RWPE1 (cell line): ENCODE measurements at regions of chr3 and their contacts with region 1.

Region 1: DNA sequence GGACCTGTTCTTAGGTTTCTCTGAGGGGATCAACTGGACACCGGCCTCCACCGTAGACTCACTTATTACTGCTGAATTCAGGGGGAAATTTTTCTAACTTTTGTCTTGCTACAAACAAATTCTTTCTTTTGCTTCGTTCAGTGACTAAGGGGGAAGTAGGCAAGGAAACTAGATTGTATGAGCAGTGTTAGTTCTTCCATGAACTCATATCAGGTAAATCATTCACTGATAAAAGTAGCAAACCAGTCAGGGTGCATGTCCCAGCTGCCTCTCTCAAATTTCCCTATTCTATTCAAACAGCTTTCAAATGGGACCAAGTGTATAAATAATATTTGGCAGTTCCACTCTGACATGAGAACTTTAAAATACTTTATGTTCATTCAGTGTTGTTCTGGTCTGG is 7.3 kb upstream of the CCDC13 start:
- DNase-seq: no peak
- H3K27ac ChIP-seq: no peak overlapping the region; the same call in 1 of the 2 replicates
- CTCF ChIP-seq: no peak

Region 2: DNA sequence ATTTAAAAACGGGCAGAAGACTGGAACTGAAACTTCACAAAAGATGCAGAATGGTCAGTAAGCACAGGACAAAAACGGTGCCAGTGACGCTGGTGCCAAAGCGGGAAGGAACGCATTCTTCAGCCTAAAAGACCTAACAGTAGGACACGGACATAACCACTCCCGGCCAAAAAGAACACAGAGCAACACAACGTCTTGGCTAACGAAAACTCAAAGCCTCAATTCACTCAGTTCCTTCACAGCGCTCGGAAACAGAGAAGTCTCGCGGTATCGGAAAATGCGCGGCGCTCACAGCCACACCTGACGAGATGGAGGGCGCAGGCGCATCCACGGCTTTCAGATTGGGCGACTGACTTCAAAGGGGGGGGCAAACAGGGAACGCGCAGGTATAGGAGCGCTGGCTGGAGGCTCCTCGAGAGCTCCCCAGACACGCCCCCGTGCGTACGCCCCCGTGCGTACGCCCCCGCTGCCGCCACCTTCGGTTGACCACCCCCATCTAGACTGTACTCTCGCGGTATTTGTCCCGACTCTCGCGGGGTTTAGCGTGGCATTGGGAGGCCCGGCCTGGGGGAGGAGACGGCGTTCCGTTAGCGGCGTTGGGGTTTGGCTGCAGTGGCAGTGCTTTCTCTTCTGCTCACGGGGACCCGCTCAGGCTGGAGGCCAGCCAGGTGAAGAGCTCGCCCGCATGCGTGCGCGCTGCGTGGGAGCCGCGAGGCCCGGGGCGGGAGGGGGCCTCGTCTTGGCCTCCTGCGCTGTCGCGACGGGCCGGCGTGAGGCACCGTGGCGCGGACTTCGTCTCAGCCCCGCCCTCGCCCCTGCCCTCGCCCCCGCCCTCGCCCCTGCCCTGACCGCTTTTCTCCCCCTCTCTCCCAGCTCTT is 180.0 kb before region 1 on chr3 and contains the start of gene NKTR:
- CTCF ChIA-PET with region 1: no interaction called
- POLR2A ChIA-PET with region 1: no interaction called
- DNase-seq: peak; percentile 94
- H3K27ac ChIP-seq: peak within 1 kb of the TSS; percentile 98
- CTCF ChIP-seq: no peak

Region 3: DNA sequence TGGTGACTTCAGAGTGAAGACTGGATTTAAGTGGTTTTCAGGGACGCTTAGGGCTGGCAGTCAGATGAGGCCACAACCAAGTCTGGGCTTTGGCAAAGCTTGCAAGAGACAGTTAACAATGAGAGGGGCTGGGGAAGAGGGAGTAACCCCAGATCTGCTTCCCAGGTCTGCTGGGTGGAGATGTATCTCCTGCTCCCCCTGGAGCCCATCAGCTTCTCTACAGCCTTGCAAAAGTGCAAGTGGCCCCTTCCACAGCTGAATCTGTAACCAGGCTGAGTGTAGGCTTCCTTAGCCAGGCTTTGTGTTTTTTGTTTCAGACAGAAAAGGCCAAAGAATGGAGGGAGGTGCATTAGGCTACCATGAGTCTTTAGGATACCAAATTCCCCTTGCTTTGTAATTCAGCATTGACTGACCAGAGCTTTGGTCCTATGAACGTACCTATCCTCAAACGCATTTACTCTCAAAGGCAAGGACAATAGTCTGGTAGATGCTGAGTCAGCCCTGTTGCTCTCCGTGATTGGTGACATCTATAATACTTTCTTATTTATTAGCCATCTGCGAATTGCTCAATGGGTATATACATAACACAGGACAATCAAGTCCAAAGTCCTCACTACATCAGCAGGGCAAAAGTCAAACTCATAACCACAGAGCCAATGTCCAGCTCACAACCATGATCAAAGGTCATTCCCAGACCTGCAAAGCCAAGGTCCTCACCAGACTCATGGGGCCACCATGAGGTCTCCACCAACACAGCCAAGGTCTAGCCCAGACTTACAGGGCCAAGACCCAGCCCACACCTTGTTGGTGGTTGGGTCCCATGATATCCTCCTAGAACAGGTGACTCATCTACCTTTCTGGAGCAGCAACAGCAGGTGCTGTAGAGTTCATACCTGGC is 24.5 kb before region 1 on chr3:
- CTCF ChIA-PET with region 1: no interaction called
- POLR2A ChIA-PET with region 1: no interaction called
- DNase-seq: no peak
- H3K27ac ChIP-seq: no peak overlapping the region
- CTCF ChIP-seq: no peak

Region 4: GRCh38 chr3:42839616-42840015 is 59.2 kb after region 1 on chr3:
- CTCF ChIA-PET with region 1: interaction called, 12 read pairs
- POLR2A ChIA-PET with region 1: no interaction called
- DNase-seq: peak; percentile 56
- H3K27ac ChIP-seq: no peak overlapping the region
- CTCF ChIP-seq: peak; percentile 82